PC-9 (cell line): ENCODE measurements at regions of chr9 and their contacts with region 1.

Region 1: DNA sequence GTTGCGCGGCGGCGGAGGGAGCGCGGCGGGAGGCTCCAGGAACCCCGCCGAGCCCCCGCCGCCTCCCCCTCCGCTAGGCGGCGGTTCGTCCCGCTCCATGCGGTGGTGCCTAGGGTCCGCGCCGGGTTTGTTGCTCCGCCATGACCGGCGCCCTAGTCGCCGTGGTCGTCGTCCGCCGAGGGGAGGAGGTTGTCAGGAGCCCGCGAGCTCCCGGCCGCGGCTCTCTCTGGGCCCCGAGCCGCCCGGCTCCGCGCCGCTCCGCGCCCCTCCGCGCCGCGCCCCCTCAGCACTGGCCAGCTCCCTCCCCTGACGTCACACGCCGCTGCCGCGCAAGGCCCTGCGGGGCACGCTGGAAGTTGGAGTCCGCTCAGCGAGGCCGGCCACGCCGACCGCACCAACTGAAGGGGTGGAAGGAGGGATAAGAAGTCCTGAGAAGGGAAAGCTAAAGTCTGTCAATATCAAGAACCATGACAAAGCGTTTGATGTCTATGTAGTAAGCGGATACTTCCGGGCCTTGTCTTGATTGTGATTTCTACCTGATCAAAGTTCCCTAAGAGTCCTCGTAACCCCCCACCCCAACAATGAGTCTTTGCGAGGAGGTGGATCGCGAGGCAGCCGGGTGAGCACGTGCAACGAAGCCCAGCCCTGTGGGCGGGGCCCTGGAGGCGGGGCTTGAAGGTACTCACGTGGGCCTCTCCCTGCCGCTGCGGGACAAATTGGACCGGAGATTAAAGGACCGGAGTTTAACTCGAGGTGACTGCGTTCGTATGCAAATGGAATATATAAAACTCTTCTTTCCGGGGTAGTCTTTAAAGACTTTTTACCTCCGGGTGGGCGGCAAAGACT is at the start of gene NR6A1:
- DNase-seq: peak; percentile 86 to 98
- H3K4me3 ChIP-seq: peak within 1 kb of the TSS; percentile 77
- H3K27ac ChIP-seq: peak within 1 kb of the TSS; percentile 74
- H3K4me1 ChIP-seq: peaks cover 25% of the 10 kb centered on the region
- H3K27me3 ChIP-seq: 0 out of 2 replicates have a peak, but pooled peaks cover under 1% of the 10 kb centered on the region
- CTCF ChIP-seq: no peak
- total RNA-seq, gene NR6A1: 13.0 TPM in 2 replicates

Region 2: DNA sequence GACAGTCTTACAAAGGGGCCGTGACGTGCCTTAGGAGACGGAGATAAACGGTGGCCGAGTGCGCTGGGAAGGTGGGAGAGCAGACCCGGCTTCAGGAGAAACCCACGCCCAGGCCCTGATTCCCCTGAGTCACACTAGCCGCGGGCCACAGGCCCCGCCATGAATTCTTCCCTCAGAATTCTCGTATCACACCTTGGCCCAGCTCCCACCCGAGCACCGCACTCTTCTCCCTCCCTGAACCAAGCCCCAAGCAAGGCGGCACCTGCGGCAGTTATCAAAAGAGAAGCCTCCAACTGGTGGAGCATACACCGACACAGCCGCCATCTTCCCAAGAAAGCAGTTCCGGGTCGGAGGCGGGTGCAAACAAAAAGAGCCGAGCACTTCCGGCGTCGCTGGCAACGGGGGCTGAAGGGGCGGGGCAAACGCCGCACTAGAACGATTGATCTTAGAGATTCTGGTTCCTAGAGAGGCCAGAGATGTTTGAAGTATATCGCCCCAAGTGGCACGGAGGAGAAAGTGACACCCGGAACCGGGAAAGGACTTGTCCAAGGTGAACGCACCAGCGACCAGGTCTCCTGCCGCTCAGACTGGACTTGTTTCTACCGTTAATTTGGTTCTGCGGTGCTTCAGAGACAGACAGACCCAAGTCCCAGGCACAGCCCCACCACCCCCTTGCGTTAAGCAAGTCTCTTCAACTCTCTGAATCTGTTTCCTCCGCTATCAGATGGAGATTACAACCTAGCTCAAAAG is 356.0 kb before region 1 on chr9 and contains the start of gene PSMB7:
- CTCF ChIA-PET with region 1: interaction called, 6 read pairs
- POLR2A ChIA-PET with region 1: no interaction called
- intact Hi-C with region 1: loop called (anchors 5 kb)
- DNase-seq: peak; percentile 91 to 96
- H3K4me3 ChIP-seq: peak within 1 kb of the TSS; percentile 90
- H3K27ac ChIP-seq: peak within 1 kb of the TSS; percentile 71
- H3K4me1 ChIP-seq: peaks cover 35% of the 10 kb centered on the region
- H3K27me3 ChIP-seq: no peaks in the 10 kb centered on the region
- CTCF ChIP-seq: peak; percentile 87
- total RNA-seq, gene PSMB7: 328 and 359 TPM in 2 replicates

Region 3: DNA sequence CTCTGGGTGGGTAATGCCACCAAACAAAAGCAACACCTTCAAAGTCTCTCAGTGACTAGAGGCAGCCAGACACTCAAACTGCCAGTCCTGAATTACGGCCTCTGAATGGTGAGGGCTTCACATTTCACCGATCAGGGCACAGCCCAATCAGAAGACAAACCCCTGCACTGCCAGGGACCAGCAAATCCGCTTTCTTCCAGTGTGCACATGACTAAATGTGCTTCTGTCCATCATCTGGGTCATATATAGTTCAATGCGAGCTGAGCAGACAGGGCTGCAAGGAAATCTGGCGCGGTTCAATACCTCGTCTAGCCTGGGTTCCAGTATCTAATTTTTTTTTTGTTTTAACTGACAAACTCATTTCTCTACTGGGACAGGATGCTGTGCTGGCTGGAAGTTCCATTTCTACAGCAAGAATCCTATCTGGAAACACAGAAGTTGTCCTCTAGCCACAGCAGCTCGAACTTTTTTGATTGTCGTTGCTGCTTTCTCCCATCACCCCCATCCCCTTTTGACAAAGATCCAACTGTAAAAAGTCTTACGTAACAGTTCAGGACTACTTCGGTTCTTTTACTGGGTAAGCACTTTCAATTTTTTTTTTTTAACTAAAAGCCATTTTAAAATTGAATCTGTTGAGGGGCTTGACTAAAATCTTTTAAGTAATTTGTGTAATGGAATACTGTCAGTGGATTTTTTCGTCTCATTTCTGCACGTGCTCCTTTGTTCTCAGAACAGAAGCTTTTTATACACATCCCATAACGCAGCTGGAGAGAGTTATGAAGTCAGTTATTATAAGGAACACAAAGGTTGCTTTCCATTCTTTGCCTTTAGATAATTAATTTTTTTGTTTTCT is 112.9 kb before region 1 on chr9:
- CTCF ChIA-PET with region 1: no interaction called
- POLR2A ChIA-PET with region 1: no interaction called
- intact Hi-C with region 1: loop called (anchors 1 kb)
- DNase-seq: peak; percentile 87 to 94
- H3K4me3 ChIP-seq: peak overlapping the region; percentile 70
- H3K27ac ChIP-seq: peak overlapping the region; percentile 94
- H3K4me1 ChIP-seq: peaks cover 41% of the 10 kb centered on the region
- H3K27me3 ChIP-seq: no peaks in the 10 kb centered on the region
- CTCF ChIP-seq: no peak

Region 4: GRCh38 chr9:124688238-124688904 is 82.9 kb before region 1 on chr9:
- CTCF ChIA-PET with region 1: no interaction called
- POLR2A ChIA-PET with region 1: no interaction called
- intact Hi-C with region 1: no loop called
- DNase-seq: no peak
- H3K4me3 ChIP-seq: no peak overlapping the region
- H3K27ac ChIP-seq: no peak overlapping the region
- H3K4me1 ChIP-seq: peaks cover 5% of the 10 kb centered on the region; the same call in 1 of the 2 replicates
- H3K27me3 ChIP-seq: no peaks in the 10 kb centered on the region
- CTCF ChIP-seq: no peak

Region 5: DNA sequence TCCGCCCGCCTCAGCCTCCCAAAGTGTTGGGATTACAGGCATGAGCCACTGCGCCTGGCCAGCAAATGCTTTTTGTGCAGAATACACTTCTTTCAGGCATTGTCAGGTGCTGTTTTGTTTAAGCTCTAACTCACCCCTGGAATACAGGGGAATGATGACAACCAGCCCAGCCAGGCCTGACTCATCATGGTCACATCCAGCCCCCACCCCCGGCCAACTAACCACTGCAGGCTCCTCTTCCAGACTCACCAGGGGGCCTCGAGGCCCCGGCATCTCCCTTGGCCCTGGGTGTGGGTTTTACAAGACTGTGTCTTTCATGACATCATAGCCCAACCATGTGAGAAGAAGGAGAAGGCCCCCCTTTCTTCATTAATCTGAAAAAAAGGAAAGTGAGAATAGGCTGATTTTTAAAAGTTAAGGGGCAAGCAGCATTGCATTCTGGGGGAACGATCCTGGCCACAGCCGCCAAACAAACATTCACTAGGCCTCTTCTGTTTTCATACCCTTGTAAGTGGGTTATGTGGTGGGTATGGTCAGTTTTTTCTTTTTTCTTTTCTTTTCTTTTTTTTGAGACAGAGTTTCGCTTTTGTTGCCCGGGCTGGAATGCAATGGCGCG is 41.3 kb after region 1 on chr9:
- CTCF ChIA-PET with region 1: interaction called, 11 read pairs
- POLR2A ChIA-PET with region 1: interaction called, 4 read pairs
- intact Hi-C with region 1: no loop called
- DNase-seq: peak; percentile 93 to 96
- H3K4me3 ChIP-seq: no peak overlapping the region
- H3K27ac ChIP-seq: peak overlapping the region; percentile 94
- H3K4me1 ChIP-seq: peaks cover 45% of the 10 kb centered on the region
- H3K27me3 ChIP-seq: no peaks in the 10 kb centered on the region
- CTCF ChIP-seq: no peak

Region 6: GRCh38 chr9:124868511-124869465 is 97.5 kb after region 1 on chr9:
- CTCF ChIA-PET with region 1: no interaction called
- POLR2A ChIA-PET with region 1: no interaction called
- intact Hi-C with region 1: no loop called
- DNase-seq: peak; percentile 67 to 93
- H3K4me3 ChIP-seq: peak overlapping the region; percentile 100
- H3K27ac ChIP-seq: peak overlapping the region; percentile 97
- H3K4me1 ChIP-seq: peaks cover 26% of the 10 kb centered on the region; the same call in 1 of the 2 replicates
- H3K27me3 ChIP-seq: no peaks in the 10 kb centered on the region
- CTCF ChIP-seq: peak; percentile 54; the same call in 1 of the 2 replicates

Region 7: GRCh38 chr9:124894741-124895170 is 123.5 kb after region 1 on chr9:
- CTCF ChIA-PET with region 1: interaction called, 3 read pairs
- POLR2A ChIA-PET with region 1: interaction called, 4 read pairs
- intact Hi-C with region 1: loop called (anchors 1 kb)
- DNase-seq: peak in 1 of 2 experiments; percentile 21
- H3K4me3 ChIP-seq: no peak overlapping the region
- H3K27ac ChIP-seq: no peak overlapping the region
- H3K4me1 ChIP-seq: no peaks in the 10 kb centered on the region
- H3K27me3 ChIP-seq: no peaks in the 10 kb centered on the region
- CTCF ChIP-seq: peak; percentile 54; the same call in 1 of the 2 replicates

Region 8: DNA sequence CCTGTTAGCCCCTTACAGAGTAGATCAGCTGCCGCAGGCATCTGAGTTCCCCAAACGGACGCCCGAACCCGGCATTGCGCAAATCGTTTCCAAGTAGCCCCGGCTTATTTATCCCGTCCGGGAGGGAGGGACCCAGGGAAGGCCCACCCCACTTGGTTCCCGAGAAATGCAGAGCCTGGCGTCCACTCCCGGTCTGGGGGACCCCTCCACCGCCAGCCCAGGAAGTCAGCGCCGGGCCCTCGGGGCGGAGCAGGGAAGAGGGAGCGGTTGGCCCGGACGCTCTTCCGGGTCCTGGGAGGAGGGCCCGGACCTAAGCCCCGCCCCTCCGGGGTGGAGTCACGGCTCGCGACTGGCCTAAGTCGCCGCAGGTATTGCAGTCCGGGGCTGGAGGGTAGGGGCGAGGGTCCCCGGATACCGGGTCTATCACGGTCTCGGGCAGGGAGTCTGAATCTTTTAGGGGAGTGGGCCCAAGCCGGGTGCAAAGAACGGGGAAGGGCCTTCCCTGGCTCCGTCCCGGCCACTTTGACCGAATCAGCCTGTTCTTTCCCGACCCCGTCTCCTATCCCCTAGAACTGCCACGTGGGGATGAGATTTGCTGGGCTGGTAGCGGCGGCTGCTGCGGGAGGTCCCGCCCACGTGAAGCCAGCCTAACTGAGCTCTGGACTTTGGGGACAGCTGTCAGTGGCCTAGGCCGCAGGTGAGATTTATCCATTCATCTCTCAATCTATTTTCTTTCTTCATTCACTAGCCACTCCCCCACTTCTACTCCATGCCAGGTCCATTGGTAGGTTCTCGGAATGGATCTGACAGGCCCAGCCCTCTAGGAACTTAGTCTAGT is 429.2 kb after region 1 on chr9 and contains the start of gene RABEPK:
- CTCF ChIA-PET with region 1: no interaction called
- POLR2A ChIA-PET with region 1: no interaction called
- intact Hi-C with region 1: loop called (anchors 5 kb)
- DNase-seq: peak; percentile 83 to 96
- H3K4me3 ChIP-seq: peak within 1 kb of the TSS; percentile 65
- H3K27ac ChIP-seq: peak within 1 kb of the TSS; percentile 54
- H3K4me1 ChIP-seq: peaks cover 7% of the 10 kb centered on the region
- H3K27me3 ChIP-seq: no peaks in the 10 kb centered on the region
- CTCF ChIP-seq: no peak
- total RNA-seq, gene RABEPK: 28.9 and 29.7 TPM in 2 replicates